Calu3 (cell line): ENCODE measurements at regions of chr20 and their contacts with region 1.

Region 1: GRCh38 chr20:59525500-59526241 is 78.7 kb upstream of the PHACTR3 start:
- DNase-seq: peak; percentile 81
- H3K4me3 Mint-ChIP-seq: no peak overlapping the region
- H3K27ac Mint-ChIP-seq: no peak overlapping the region
- H3K4me1 Mint-ChIP-seq: no peaks in the 10 kb centered on the region
- H3K27me3 Mint-ChIP-seq: peaks cover 92% of the 10 kb centered on the region
- CTCF ChIP-seq: peak; percentile 88

Region 2: DNA sequence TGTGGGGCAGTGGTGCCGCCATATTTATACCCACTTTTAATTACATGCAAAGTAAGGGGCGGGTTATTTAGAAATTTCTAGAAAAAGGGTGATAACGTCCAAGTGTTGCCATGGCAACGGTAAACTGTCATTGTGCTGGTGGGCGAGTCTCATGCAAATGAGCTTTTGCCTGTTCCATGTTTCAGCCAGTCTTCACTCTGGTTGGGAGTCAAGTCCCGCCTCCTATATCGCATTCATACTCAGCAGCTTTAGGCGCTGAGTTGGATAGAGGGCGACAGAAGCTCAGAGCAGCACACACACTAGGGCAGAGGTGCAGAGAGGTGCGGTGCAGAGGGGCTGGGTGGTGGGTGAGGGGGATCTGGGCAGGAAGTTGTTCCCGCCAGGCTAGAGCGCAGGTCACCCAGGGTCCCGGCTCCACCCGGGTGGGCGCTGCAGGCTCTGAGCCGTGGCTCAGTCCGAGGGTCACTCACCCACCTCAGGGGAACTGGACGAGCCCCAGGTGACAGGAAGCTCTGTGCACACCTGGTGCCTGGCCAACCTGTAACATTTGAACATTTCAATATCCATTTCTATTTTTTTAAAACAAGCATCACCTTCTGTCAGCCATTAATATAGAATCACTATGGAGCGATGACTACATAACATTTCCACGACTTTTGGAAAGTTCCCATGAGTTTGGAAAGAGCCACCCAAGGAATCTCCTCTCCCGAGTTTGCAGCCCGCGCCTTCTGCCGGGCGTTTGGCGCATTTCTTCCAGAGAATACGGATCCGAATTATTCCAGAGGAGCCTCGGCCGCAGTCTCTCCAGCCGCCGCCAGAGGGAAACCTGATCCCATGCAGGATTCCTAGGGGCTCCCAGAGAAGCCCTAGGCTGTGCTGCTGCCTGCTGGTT is 10.4 kb before region 1 on chr20:
- CTCF ChIA-PET with region 1: interaction called, 5 read pairs
- intact Hi-C with region 1: loop called (anchors 1 kb)
- DNase-seq: peak; percentile 89
- H3K4me3 Mint-ChIP-seq: no peak overlapping the region
- H3K27ac Mint-ChIP-seq: no peak overlapping the region
- H3K4me1 Mint-ChIP-seq: no peaks in the 10 kb centered on the region
- H3K27me3 Mint-ChIP-seq: peaks cover 100% of the 10 kb centered on the region
- CTCF ChIP-seq: peak; percentile 94

Region 3: DNA sequence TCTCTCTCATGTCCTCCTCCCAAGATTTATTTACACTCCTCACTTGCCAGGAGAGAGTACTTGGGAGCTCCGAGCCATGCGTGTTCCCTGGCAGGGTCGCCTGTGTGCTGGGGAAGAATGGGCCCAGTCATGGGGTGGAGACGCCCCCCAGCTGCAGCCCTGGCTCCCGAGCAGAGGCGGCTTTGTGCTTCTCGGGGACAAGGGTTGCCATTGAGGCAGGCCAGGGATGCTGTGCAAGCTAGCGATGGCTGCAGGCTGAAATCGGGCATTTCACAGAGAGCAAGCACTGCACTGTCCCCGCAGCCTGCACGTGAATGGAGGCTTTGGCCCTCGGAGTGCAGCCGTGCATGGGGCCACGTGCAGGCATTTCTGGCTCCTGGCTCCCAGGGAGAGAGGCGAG is 102.5 kb after region 1 on chr20:
- CTCF ChIA-PET with region 1: no interaction called
- intact Hi-C with region 1: no loop called
- DNase-seq: no peak
- H3K4me3 Mint-ChIP-seq: no peak overlapping the region
- H3K27ac Mint-ChIP-seq: no peak overlapping the region
- H3K4me1 Mint-ChIP-seq: no peaks in the 10 kb centered on the region
- H3K27me3 Mint-ChIP-seq: peaks cover 97% of the 10 kb centered on the region
- CTCF ChIP-seq: no peak